WTC11 (cell line): ENCODE measurements at regions of chr6 and their contacts with region 1.

Region 1: GRCh38 chr6:113500221-113500620 is 356.9 kb upstream of the MARCKS start:
- DNase-seq: no peak
- ATAC-seq: no peak
- H3K4me3 Mint-ChIP-seq: no peak overlapping the region
- H3K27ac Mint-ChIP-seq: no peak overlapping the region
- H3K4me1 Mint-ChIP-seq: no peaks in the 10 kb centered on the region
- H3K27me3 Mint-ChIP-seq: no peaks in the 10 kb centered on the region
- CTCF ChIP-seq: no peak

Region 2: DNA sequence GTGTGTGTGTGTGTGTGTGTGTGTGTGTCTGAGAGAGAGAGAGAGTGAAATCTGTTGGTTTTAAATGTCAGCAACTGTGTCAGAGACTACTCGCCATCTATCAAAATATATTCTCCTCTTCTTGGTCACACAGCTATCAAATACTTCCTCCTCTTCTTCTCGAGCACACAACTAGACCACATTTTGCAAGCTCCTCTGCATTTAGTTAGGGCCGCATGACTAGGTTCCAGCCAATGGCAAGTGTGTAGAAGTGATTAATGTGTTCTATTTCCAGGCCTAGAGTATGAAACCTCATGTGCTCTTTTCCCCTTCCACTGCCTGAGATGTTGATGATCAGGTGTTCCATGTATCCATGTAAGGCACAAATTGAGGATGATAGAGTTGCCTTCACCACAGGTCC is 78.5 kb after region 1 on chr6:
- CTCF ChIA-PET with region 1: no interaction called
- POLR2A ChIA-PET with region 1: no interaction called
- DNase-seq: no peak
- ATAC-seq: no peak
- H3K4me3 Mint-ChIP-seq: no peak overlapping the region
- H3K27ac Mint-ChIP-seq: no peak overlapping the region
- H3K4me1 Mint-ChIP-seq: peaks cover 10% of the 10 kb centered on the region
- H3K27me3 Mint-ChIP-seq: no peaks in the 10 kb centered on the region; the same call in 1 of the 2 replicates
- CTCF ChIP-seq: no peak

Region 3: GRCh38 chr6:113664909-113665308 is 164.7 kb after region 1 on chr6:
- CTCF ChIA-PET with region 1: no interaction called
- POLR2A ChIA-PET with region 1: interaction called, 13 read pairs
- DNase-seq: no peak
- ATAC-seq: no peak
- H3K4me3 Mint-ChIP-seq: no peak overlapping the region
- H3K27ac Mint-ChIP-seq: no peak overlapping the region
- H3K4me1 Mint-ChIP-seq: peaks cover 5% of the 10 kb centered on the region
- H3K27me3 Mint-ChIP-seq: no peaks in the 10 kb centered on the region
- CTCF ChIP-seq: no peak